ENCODE measurements at regions of chr17 and their contacts with region 1.

Region 1: GRCh38 chr17:38868817-38869525 is 887 bp upstream of the LASP1 start:
- DNase-seq: peak; percentile 92
- H3K4me3 ChIP-seq: peak overlapping the region; percentile 89
- H3K27ac ChIP-seq: peak overlapping the region; percentile 100
- H3K4me1 ChIP-seq: peaks cover 21% of the 10 kb centered on the region
- H3K27me3 ChIP-seq: no peaks in the 10 kb centered on the region
- CTCF ChIP-seq: no peak

Region 2: GRCh38 chr17:38674749-38675615 is 194.0 kb before region 1 on chr17 and contains the start of gene EPOP:
- intact Hi-C with region 1: no loop called
- DNase-seq: peak; percentile 87
- H3K4me3 ChIP-seq: peak within 1 kb of the TSS; percentile 60
- H3K27ac ChIP-seq: no peak within 1 kb of the TSS
- H3K4me1 ChIP-seq: no peaks in the 10 kb centered on the region
- H3K27me3 ChIP-seq: peaks cover 39% of the 10 kb centered on the region
- CTCF ChIP-seq: no peak
- total RNA-seq, gene EPOP: 1.1 to 1.8 TPM

Region 3: GRCh38 chr17:38809828-38810227 is 59.1 kb before region 1 on chr17:
- intact Hi-C with region 1: loop called (anchors 5 kb)
- DNase-seq: no peak
- H3K4me3 ChIP-seq: no peak overlapping the region
- H3K27ac ChIP-seq: no peak overlapping the region
- H3K4me1 ChIP-seq: no peaks in the 10 kb centered on the region
- H3K27me3 ChIP-seq: no peaks in the 10 kb centered on the region
- CTCF ChIP-seq: no peak

Region 4: DNA sequence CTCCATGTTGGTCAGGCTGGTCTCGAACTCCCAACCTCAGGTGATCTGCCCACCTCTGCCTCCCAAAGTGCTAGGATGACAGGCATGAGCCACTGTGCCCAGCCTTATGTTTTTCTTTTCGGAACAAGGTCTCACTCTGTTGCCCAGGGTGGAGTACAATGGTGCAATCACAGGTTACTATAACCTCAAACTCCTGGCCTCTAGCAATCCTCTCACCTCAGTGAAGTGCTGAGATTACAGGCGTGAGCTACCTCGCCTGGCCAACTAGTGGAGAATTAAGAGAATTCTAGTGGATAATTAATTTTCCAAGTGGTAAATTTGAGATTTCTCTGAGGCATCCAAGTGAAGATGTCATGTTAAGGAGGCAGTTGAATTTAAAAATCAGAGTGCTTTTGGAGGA is 101.2 kb after region 1 on chr17:
- intact Hi-C with region 1: loop called (anchors 10 kb)
- DNase-seq: no peak
- H3K4me3 ChIP-seq: no peak overlapping the region
- H3K27ac ChIP-seq: no peak overlapping the region
- H3K4me1 ChIP-seq: no peaks in the 10 kb centered on the region
- H3K27me3 ChIP-seq: no peaks in the 10 kb centered on the region
- CTCF ChIP-seq: no peak

Measured in colonic mucosa (tissue), 4 donors.